Activated CD8-positive, alpha-beta T cell treated with anti-CD3 and anti-CD28 coated beads, Interleukin-2, amount 10 ng/mL, durations not matched to agents 7 days and 5 days (primary cell): ENCODE measurements at regions of chr15 and their contacts with region 1.

Region 1: GRCh38 chr15:78195735-78196201 is 38.6 kb downstream of the ACSBG1 start:
- DNase-seq: peak; percentile 62
- ATAC-seq: peak; percentile 90
- H3K4me3 Mint-ChIP-seq: no peak overlapping the region
- H3K27ac Mint-ChIP-seq: no peak overlapping the region
- H3K4me1 Mint-ChIP-seq: no peaks in the 10 kb centered on the region
- H3K27me3 Mint-ChIP-seq: peaks cover 5% of the 10 kb centered on the region

Region 2: DNA sequence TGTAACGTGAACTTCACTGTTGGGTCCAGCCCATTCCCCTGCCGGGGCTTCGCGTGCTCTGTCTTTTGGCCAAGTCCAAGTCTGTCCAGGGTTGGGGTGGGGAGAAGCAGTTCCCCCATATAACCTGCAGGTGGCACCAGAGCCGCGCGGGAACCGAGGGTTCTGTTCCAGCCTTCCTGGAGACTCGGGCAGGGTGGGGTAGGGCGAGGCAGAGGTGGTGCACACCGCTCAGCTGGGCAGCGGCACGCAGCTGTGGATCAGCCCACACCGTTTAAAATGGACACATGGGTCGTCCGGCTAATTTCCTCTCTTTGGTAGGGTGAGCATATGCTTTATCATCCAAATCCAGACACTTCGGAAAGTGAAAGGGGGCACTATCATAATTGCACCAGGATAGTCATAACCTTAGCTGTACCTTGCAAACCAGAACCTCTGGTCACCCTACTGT is 236.3 kb before region 1 on chr15:
- CTCF ChIA-PET with region 1: interaction called, 32 read pairs
- POLR2A ChIA-PET with region 1: no interaction called
- DNase-seq: peak; percentile 84
- ATAC-seq: peak; percentile 99
- H3K4me3 Mint-ChIP-seq: peak overlapping the region; percentile 39
- H3K27ac Mint-ChIP-seq: no peak overlapping the region
- H3K4me1 Mint-ChIP-seq: peaks cover 19% of the 10 kb centered on the region
- H3K27me3 Mint-ChIP-seq: peaks cover 27% of the 10 kb centered on the region

Region 3: GRCh38 chr15:78018946-78019644 is 176.7 kb before region 1 on chr15:
- CTCF ChIA-PET with region 1: interaction called, 12 read pairs
- POLR2A ChIA-PET with region 1: no interaction called
- DNase-seq: peak; percentile 60
- ATAC-seq: peak; percentile 88
- H3K4me3 Mint-ChIP-seq: peak overlapping the region; percentile 22
- H3K27ac Mint-ChIP-seq: peak overlapping the region; percentile 75
- H3K4me1 Mint-ChIP-seq: peaks cover 34% of the 10 kb centered on the region
- H3K27me3 Mint-ChIP-seq: no peaks in the 10 kb centered on the region

Region 4: GRCh38 chr15:78140292-78140691 is 55.5 kb before region 1 on chr15:
- CTCF ChIA-PET with region 1: interaction called, 211 read pairs
- POLR2A ChIA-PET with region 1: no interaction called
- DNase-seq: no peak
- ATAC-seq: no peak
- H3K4me3 Mint-ChIP-seq: no peak overlapping the region
- H3K27ac Mint-ChIP-seq: no peak overlapping the region
- H3K4me1 Mint-ChIP-seq: no peaks in the 10 kb centered on the region
- H3K27me3 Mint-ChIP-seq: peaks cover 2% of the 10 kb centered on the region

Region 5: GRCh38 chr15:78155355-78155939 is 40.3 kb before region 1 on chr15:
- CTCF ChIA-PET with region 1: interaction called, 34 read pairs
- POLR2A ChIA-PET with region 1: interaction called, 3 read pairs
- DNase-seq: no peak
- ATAC-seq: no peak
- H3K4me3 Mint-ChIP-seq: no peak overlapping the region
- H3K27ac Mint-ChIP-seq: no peak overlapping the region
- H3K4me1 Mint-ChIP-seq: peaks cover 22% of the 10 kb centered on the region
- H3K27me3 Mint-ChIP-seq: no peaks in the 10 kb centered on the region

Region 6: GRCh38 chr15:78177447-78177873 is 18.3 kb before region 1 on chr15:
- CTCF ChIA-PET with region 1: interaction called, 32 read pairs
- POLR2A ChIA-PET with region 1: no interaction called
- DNase-seq: peak; percentile 56
- ATAC-seq: no peak
- H3K4me3 Mint-ChIP-seq: no peak overlapping the region
- H3K27ac Mint-ChIP-seq: no peak overlapping the region
- H3K4me1 Mint-ChIP-seq: peaks cover 27% of the 10 kb centered on the region
- H3K27me3 Mint-ChIP-seq: peaks cover 3% of the 10 kb centered on the region

Region 7: GRCh38 chr15:78225783-78226541 is 30.2 kb after region 1 on chr15:
- CTCF ChIA-PET with region 1: interaction called, 19 read pairs
- POLR2A ChIA-PET with region 1: interaction called, 3 read pairs
- DNase-seq: no peak
- ATAC-seq: no peak
- H3K4me3 Mint-ChIP-seq: no peak overlapping the region
- H3K27ac Mint-ChIP-seq: no peak overlapping the region
- H3K4me1 Mint-ChIP-seq: peaks cover 5% of the 10 kb centered on the region
- H3K27me3 Mint-ChIP-seq: peaks cover 4% of the 10 kb centered on the region